ENCODE measurements at regions of chr4 and their contacts with region 1.

Region 1: DNA sequence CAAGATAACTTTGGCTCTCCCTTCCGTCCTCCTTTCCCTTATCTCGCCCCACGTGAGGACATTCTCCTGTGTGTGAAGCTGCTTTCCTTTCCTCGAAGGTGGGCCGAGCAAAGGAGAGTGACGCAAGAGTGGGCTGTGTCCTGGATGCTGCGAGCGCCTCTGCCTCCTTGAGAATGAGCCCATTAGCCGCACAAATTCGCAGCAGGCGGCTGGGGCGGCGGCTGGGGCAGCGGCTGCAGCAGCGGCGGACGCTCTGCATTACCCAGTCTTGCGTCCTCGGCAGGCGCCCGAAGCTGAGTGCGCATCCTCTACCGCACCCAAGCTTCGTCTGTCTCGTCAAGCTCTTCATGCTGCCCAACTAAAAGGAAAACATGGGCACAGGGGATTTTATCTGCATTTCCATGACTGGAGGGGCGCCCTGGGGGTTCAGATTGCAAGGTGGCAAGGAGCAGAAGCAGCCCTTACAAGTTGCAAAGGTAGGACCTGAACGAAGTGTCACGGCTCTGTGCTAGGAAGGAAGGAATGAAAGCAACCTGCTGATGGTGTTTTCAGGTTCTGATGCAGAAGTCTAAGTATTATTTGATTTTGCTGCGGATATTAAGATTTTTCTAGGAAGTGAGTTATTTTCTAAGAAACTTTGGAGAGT is at the start of gene SYNPO2:
- DNase-seq: peak; percentile 91 to 94 (median 92)
- H3K4me3 ChIP-seq: peak within 1 kb of the TSS; percentile 66
- H3K27ac ChIP-seq: peak within 1 kb of the TSS; percentile 16 to 71
- H3K4me1 ChIP-seq: peaks cover 1% of the 10 kb centered on the region
- H3K27me3 ChIP-seq: no peaks in the 10 kb centered on the region
- CTCF ChIP-seq: no peak
- EP300 ChIP-seq: no peak
- POLR2A ChIP-seq: peak; percentile 92
- total RNA-seq, gene SYNPO2: 61.9 to 265 (median 165) TPM

Region 2: DNA sequence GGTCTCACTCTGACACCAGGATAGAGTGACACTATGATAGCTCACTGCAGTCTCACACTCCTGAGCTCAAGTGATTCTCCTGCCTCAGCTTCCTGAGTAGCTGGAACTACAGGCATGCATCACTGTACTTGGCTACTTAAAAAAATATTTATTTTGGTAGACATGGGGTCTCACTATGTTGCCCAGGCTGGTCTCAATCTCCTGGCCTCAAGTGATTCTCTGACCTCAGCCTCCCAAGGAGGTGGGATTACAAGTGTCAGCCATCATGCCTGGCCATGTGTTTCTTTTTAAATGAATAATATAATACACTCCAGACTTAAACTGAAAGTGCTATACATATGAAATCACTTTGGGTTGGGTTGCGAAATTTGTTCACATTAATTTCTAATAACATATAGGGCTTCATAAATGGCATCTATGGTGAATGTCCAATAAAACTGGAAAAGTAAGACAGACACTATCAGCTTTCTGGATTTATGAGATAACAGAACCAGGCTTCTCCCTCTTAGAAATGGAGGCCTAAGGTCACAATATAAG is 100.9 kb before region 1 on chr4:
- intact Hi-C with region 1: no loop called
- DNase-seq: no peak
- H3K4me3 ChIP-seq: no peak overlapping the region
- H3K27ac ChIP-seq: no peak overlapping the region
- H3K4me1 ChIP-seq: peaks cover 2% of the 10 kb centered on the region
- H3K27me3 ChIP-seq: no peaks in the 10 kb centered on the region
- CTCF ChIP-seq: no peak
- EP300 ChIP-seq: no peak
- POLR2A ChIP-seq: no peak

Region 3: GRCh38 chr4:118835571-118836300 is 53.1 kb before region 1 on chr4 and contains the start of gene SEC24D:
- intact Hi-C with region 1: loop called in 1 of 4 experiments (anchors 10 kb)
- DNase-seq: peak; percentile 86 to 94 (median 92)
- H3K4me3 ChIP-seq: peak within 1 kb of the TSS; percentile 84
- H3K27ac ChIP-seq: peak within 1 kb of the TSS; percentile 88 to 90
- H3K4me1 ChIP-seq: peaks cover 1% of the 10 kb centered on the region
- H3K27me3 ChIP-seq: no peaks in the 10 kb centered on the region
- CTCF ChIP-seq: peak in 1 of 3 donors; percentile 18
- EP300 ChIP-seq: no peak
- POLR2A ChIP-seq: peak; percentile 80
- total RNA-seq, gene SEC24D: 25.2 to 53.0 (median 39.5) TPM

Region 4: DNA sequence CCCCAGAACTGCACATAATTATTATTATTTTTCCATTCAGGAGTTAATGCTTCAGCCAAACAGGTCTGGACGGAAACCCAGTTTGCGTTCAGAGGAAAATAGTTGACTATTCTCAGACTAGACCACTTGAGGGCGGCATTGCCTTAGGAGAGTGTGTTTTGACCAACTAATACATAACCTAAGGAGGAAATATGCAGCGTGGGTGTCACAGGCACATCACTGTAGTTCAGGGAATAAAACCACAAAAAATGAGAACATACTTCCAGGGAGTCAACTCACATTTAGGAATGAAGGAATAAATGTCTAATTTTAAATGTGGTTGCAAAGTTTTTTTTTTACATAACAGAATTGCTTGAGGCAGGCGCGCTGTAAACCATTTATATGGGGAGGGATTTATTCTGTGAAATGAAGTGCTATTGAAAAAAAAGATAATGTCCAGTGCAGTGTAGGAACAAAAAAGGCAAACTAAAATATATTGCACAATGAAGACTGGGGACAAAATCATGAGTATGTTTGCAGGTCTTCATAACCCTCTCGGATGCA is 93.1 kb after region 1 on chr4:
- intact Hi-C with region 1: no loop called
- DNase-seq: peak; percentile 50 to 79 (median 69)
- H3K4me3 ChIP-seq: no peak overlapping the region
- H3K27ac ChIP-seq: no peak overlapping the region
- H3K4me1 ChIP-seq: peaks cover 10% of the 10 kb centered on the region
- H3K27me3 ChIP-seq: no peaks in the 10 kb centered on the region
- CTCF ChIP-seq: peak; percentile 67 to 86 (median 79)
- EP300 ChIP-seq: no peak
- POLR2A ChIP-seq: no peak

Region 5: GRCh38 chr4:119103263-119103662 is 214.5 kb after region 1 on chr4:
- intact Hi-C with region 1: no loop called
- DNase-seq: no peak
- H3K4me3 ChIP-seq: no peak overlapping the region
- H3K27ac ChIP-seq: no peak overlapping the region
- H3K4me1 ChIP-seq: no peaks in the 10 kb centered on the region
- H3K27me3 ChIP-seq: no peaks in the 10 kb centered on the region
- CTCF ChIP-seq: no peak
- EP300 ChIP-seq: no peak
- POLR2A ChIP-seq: no peak

Measured in ovary (tissue), 10 donors.